ENCODE measurements at regions of chr6 and their contacts with region 1.

Region 1: GRCh38 chr6:144602523-144603180 is 317.5 kb downstream of the UTRN start:
- DNase-seq: no peak
- H3K4me3 Mint-ChIP-seq: no peak overlapping the region
- H3K27ac Mint-ChIP-seq: peak overlapping the region; percentile 67
- H3K4me1 Mint-ChIP-seq: peaks cover 49% of the 10 kb centered on the region
- H3K27me3 Mint-ChIP-seq: no peaks in the 10 kb centered on the region

Region 2: DNA sequence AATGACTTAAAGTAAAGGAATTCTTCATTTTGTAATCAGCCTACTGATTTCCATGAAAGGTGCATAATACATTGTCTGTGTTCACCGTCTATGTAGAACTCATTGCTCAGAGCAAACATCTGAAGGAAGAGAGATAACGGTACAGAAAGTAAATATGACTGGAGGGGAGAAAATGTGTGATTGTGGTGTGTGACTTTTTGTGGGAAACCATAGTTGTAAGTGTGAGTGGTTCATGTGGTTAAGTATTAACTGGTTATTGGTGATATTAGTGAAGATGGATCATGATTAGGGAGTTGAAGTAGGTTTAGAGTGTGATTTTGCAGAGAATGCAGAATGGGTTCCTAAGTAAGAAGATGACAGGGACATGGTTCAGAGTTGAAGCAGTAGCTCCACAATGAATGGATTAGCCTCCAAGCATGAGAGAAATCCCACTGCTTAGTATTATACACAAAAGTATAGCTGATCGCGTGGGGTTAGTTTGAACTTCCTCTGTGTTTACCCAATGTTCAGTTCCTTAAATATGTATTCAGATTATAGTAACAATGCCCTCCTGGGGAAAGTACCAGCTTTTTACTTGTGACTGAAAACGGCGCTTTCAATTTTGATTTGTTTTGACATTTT is 51.3 kb after region 1 on chr6:
- intact Hi-C with region 1: loop called (anchors 2 kb)
- DNase-seq: no peak
- H3K4me3 Mint-ChIP-seq: no peak overlapping the region
- H3K27ac Mint-ChIP-seq: no peak overlapping the region
- H3K4me1 Mint-ChIP-seq: peaks cover 25% of the 10 kb centered on the region
- H3K27me3 Mint-ChIP-seq: no peaks in the 10 kb centered on the region

Region 3: DNA sequence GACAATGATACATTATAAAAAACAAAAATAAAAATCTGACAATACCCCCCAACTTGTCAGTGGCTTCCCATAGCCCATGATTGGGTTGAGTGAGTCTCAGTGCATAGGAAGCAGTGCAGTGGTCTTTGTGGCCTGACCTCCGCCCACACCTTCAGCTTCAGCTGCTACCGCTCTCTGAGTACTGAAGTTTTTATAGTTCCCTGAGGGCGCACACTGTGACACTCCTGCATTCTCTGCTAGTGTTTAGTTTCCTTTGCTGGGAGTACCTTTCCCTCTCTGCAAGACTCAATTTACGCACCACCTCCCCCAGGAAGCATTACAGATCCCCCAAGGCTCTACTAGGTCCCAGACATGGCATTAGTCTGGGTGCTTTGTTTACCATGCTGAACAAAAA is 123.5 kb after region 1 on chr6:
- intact Hi-C with region 1: loop called (anchors 2 kb)
- DNase-seq: no peak
- H3K4me3 Mint-ChIP-seq: no peak overlapping the region
- H3K27ac Mint-ChIP-seq: peak overlapping the region; percentile 60
- H3K4me1 Mint-ChIP-seq: peaks cover 41% of the 10 kb centered on the region
- H3K27me3 Mint-ChIP-seq: no peaks in the 10 kb centered on the region

Region 4: DNA sequence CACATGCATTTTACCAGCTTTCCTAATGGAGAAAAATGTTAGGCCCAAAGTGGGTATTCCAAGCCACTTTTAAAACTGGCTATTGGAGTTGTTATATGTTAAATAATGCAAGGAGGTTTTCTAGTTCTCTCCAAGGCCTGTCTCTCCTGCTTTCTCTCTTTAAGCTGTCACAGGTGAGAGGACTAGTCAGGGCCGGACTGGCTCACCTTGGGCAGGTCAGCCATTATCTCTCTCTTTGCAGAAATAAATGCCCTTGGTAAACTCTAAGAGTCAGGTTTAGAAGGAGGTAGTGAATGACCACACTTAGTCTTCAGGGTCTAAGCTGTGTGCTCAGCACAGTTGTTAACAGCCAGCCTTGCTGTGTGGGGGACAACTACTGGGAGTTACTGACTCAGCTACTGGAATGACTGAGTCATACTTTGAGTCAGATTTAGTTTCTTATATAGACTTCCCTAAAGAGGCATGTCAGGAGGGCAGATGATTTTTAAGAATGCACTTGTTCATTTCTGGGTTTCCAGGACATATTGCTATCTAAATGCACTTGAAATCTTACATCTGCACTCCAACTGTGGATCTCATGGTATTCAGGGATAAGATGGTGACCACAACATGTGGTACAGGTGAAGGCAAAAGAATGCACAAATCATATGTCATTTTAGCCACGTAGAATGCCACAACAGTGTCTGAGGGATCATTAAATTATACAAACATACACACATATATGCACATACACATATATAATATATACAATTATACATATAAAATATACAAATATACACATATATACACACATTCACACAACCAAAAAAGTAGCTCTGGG is 413.3 kb after region 1 on chr6:
- intact Hi-C with region 1: loop called (anchors 1 kb)
- DNase-seq: peak; percentile 14
- H3K4me3 Mint-ChIP-seq: no peak overlapping the region
- H3K27ac Mint-ChIP-seq: peak overlapping the region; percentile 70
- H3K4me1 Mint-ChIP-seq: peaks cover 47% of the 10 kb centered on the region
- H3K27me3 Mint-ChIP-seq: no peaks in the 10 kb centered on the region

Measured in activated T-helper 2 cell treated with anti-CD3 and anti-CD28 coated beads, Interferon-gamma antibody, Interleukin-2, Interleukin-4, amounts not matched to agents 10 μg/mL and 5 μg/mL and 100 μg/mL, durations not matched to agents 14 hours and 24 hours and 36 hours (primary cell).